Endothelial cell of umbilical vein (primary cell): ENCODE measurements at regions of chr1 and their contacts with region 1.

Region 1: DNA sequence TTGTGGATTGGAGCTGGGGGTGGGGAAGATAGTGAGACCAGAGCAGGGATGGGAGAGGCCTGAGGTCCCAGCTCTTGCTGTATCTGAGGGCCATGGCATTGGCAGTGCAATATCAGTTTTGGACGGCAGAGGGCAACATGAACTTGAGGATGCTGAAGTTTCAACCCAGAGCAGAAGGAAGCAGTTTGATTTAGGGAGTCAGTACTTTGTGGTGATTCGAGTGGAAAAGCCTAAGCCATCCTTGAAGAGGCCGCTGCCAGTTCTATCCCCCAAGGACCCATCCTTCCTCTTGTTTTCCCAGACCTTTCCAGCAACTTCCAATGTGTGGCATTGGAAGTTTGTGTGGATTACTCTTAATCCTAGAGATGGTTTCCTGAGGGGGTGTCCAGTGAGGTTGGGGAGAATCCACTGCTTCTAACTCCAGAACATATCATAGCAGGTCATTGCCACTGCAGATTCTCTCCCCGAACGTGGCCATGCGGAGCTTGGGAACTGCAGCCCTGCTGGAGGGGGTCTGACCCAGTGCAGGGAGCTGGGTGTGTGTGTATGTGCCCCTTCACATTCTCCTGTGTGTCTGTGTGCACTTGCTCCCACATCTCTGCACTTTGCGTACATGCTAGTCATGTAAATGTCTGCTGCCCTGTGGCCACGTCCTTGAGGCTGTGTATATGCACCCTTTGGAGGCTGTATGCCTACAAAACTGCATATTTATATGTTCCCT is 24.1 kb downstream of the SLC26A9 start:
- DNase-seq: peak; percentile 85
- H3K4me3 ChIP-seq: no peak overlapping the region
- H3K27ac ChIP-seq: no peak overlapping the region
- H3K4me1 ChIP-seq: no peaks in the 10 kb centered on the region
- H3K27me3 ChIP-seq: no peaks in the 10 kb centered on the region
- CTCF ChIP-seq: peak; percentile 83 to 86
- POLR2A ChIP-seq: no peak

Region 2: DNA sequence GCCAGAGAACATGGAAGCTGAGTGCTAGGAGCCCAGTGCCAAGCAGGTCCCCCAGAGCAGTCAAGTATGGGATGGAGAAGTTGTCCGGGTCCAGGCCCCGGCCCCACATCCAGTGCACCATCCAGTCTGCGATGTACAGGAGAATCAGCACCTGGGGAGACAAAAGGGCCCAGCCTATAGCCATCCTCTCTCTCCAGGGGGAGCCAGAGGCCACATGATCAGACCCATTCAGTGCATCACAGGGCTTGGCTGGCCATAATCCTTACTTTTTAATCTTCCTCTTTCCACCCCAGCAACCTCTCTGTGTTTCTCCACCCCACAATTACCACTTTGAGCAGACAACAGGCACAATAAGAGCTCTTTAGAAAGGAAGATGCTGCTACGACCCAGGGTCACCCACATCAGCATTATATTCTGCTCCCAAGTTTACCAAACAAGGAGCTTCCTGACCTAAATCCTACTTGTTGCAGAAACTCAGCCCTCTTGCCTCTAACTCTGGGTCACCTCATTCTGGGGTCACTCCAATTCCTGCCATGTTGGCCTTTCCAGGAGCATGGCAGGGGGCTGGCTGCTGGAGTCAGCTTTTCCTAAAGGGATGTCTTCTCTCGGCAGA is 127.5 kb before region 1 on chr1:
- CTCF ChIA-PET with region 1: interaction called, 76 read pairs
- POLR2A ChIA-PET with region 1: no interaction called
- dilution Hi-C with region 1: no loop called
- intact Hi-C with region 1: loop called (anchors 1 kb)
- DNase-seq: peak; percentile 53
- H3K4me3 ChIP-seq: no peak overlapping the region
- H3K27ac ChIP-seq: no peak overlapping the region
- H3K4me1 ChIP-seq: no peaks in the 10 kb centered on the region
- H3K27me3 ChIP-seq: no peaks in the 10 kb centered on the region
- CTCF ChIP-seq: peak; percentile 71 to 86
- POLR2A ChIP-seq: no peak

Region 3: DNA sequence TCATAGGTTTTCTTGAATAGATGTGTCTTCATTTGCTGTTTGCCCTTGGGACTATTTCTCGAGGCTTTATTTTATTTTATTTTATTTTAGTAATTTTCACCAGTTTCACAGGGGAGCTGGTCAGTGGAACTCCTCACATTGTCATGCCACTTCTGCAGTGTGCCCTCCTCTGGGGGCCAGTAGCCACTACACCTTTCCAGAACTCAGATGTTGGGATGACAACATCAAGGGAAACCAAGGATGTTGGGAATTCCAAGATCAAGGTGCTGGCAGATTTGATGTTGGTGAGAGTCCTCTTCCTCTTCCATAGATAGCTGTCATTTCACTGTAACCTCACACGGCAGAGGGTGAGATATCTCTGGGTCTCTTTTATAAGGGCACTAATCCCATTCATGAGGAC is 11.4 kb before region 1 on chr1:
- CTCF ChIA-PET with region 1: interaction called, 18 read pairs
- POLR2A ChIA-PET with region 1: no interaction called
- dilution Hi-C with region 1: no loop called
- intact Hi-C with region 1: no loop called
- DNase-seq: peak; percentile 46
- H3K4me3 ChIP-seq: no peak overlapping the region
- H3K27ac ChIP-seq: no peak overlapping the region
- H3K4me1 ChIP-seq: no peaks in the 10 kb centered on the region
- H3K27me3 ChIP-seq: peaks cover 5 to 9% of the 10 kb centered on the region in 2 experiments
- CTCF ChIP-seq: peak; percentile 65 to 75
- POLR2A ChIP-seq: no peak

Region 4: GRCh38 chr1:205933671-205934618 is 14.8 kb after region 1 on chr1:
- CTCF ChIA-PET with region 1: interaction called, 17 read pairs
- POLR2A ChIA-PET with region 1: no interaction called
- dilution Hi-C with region 1: no loop called
- intact Hi-C with region 1: no loop called
- DNase-seq: peak; percentile 84
- H3K4me3 ChIP-seq: no peak overlapping the region
- H3K27ac ChIP-seq: peak overlapping the region; percentile 76
- H3K4me1 ChIP-seq: peaks cover 35% of the 10 kb centered on the region
- H3K27me3 ChIP-seq: no peaks in the 10 kb centered on the region
- CTCF ChIP-seq: no peak
- POLR2A ChIP-seq: no peak

Region 5: GRCh38 chr1:205950280-205950679 is 31.1 kb after region 1 on chr1:
- CTCF ChIA-PET with region 1: interaction called, 10 read pairs
- POLR2A ChIA-PET with region 1: no interaction called
- dilution Hi-C with region 1: no loop called
- intact Hi-C with region 1: no loop called
- DNase-seq: no peak
- H3K4me3 ChIP-seq: no peak overlapping the region
- H3K27ac ChIP-seq: no peak overlapping the region
- H3K4me1 ChIP-seq: peaks cover 11% of the 10 kb centered on the region
- H3K27me3 ChIP-seq: peaks cover 14 to 19% of the 10 kb centered on the region in 2 experiments
- CTCF ChIP-seq: no peak
- POLR2A ChIP-seq: no peak

Region 6: DNA sequence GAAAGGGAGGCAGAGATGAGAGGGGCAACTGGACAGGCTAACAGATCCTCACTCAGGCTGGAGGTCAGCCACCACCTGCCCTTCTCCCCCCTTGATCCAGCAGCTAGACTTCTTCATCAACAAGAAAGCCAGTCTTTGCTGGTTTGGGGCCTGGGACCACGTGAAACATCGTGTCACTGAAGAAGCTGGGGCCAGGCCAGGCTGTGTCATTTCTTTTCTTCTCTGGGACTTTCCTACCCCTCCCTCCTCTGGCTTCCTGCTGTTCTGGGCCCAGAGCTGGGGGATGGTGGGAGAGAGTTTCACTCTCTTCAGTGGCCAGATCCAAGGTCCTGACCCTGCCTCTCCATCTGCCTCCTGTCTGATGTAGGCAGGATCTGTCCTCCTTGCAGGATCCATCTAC is 42.2 kb after region 1 on chr1:
- CTCF ChIA-PET with region 1: interaction called, 24 read pairs
- POLR2A ChIA-PET with region 1: no interaction called
- dilution Hi-C with region 1: no loop called
- intact Hi-C with region 1: no loop called
- DNase-seq: peak; percentile 42
- H3K4me3 ChIP-seq: no peak overlapping the region
- H3K27ac ChIP-seq: no peak overlapping the region
- H3K4me1 ChIP-seq: peaks cover 19% of the 10 kb centered on the region
- H3K27me3 ChIP-seq: peaks cover 6 to 14% of the 10 kb centered on the region in 2 experiments
- CTCF ChIP-seq: no peak
- POLR2A ChIP-seq: no peak